ENCODE measurements at regions of chr3 and their contacts with region 1.

Region 1: GRCh38 chr3:11288786-11289682 is 16.8 kb downstream of the ATG7 start:
- DNase-seq: no peak
- ATAC-seq: peak; percentile 32
- H3K4me3 Mint-ChIP-seq: peak overlapping the region; percentile 61
- H3K27ac Mint-ChIP-seq: peak overlapping the region; percentile 99
- H3K4me1 Mint-ChIP-seq: peaks cover 46% of the 10 kb centered on the region
- H3K27me3 Mint-ChIP-seq: no peaks in the 10 kb centered on the region

Region 2: GRCh38 chr3:11250902-11251813 is 37.9 kb before region 1 on chr3:
- POLR2A ChIA-PET with region 1: no interaction called
- DNase-seq: no peak
- ATAC-seq: no peak
- H3K4me3 Mint-ChIP-seq: no peak overlapping the region
- H3K27ac Mint-ChIP-seq: peak overlapping the region; percentile 43
- H3K4me1 Mint-ChIP-seq: peaks cover 8% of the 10 kb centered on the region
- H3K27me3 Mint-ChIP-seq: peaks cover 5% of the 10 kb centered on the region

Region 3: DNA sequence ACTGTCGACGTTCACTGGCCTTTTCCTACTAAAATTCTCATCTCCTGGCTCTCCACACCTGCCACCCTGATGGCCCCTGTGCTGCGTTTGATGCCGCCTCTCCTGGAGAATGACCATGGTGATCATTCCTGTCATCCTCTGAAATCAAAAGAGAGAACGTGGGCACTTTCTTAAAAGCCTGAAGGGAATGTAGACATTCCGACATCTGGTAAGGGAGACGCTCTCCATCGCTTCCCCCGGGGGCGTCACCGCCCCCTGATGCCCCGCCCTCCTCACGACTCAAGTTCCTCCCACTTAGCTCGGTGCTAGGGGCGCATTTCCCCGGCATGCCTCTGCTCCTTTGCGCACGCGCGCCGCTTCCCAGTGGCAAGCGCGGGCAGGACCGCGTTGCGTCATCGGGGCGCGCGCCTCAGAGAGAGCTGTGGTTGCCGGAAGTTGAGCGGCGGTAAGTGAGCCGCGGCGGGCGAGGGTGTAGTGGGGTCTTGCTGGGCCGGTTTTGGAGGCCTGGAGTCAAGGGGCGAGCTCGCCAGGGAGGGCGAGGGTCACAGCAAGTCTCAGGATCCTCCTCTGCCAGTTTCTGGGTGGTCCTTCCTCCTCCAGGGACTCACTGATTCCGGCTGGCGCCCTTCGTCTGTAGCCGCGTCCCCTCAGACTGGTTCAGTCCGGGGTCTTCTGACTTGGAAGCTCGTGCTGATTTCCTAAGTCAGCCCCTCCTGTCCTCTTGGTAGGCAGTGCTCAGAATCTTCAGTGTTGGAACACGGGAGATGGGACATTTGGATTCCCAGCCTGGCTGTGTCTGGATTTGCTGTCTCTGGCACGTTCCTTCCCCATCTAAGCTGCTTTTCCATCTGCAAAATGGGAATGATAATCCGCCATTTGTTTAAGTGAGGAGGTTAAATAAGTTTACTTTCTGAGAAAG is 16.8 kb before region 1 on chr3 and contains the start of gene ATG7:
- POLR2A ChIA-PET with region 1: interaction called, 96 read pairs
- DNase-seq: peak; percentile 99
- ATAC-seq: peak; percentile 96
- H3K4me3 Mint-ChIP-seq: peak within 1 kb of the TSS; percentile 96
- H3K27ac Mint-ChIP-seq: peak within 1 kb of the TSS; percentile 97
- H3K4me1 Mint-ChIP-seq: peaks cover 42% of the 10 kb centered on the region
- H3K27me3 Mint-ChIP-seq: no peaks in the 10 kb centered on the region
- total RNA-seq, gene ATG7: 26.4 to 28.6 TPM

Region 4: DNA sequence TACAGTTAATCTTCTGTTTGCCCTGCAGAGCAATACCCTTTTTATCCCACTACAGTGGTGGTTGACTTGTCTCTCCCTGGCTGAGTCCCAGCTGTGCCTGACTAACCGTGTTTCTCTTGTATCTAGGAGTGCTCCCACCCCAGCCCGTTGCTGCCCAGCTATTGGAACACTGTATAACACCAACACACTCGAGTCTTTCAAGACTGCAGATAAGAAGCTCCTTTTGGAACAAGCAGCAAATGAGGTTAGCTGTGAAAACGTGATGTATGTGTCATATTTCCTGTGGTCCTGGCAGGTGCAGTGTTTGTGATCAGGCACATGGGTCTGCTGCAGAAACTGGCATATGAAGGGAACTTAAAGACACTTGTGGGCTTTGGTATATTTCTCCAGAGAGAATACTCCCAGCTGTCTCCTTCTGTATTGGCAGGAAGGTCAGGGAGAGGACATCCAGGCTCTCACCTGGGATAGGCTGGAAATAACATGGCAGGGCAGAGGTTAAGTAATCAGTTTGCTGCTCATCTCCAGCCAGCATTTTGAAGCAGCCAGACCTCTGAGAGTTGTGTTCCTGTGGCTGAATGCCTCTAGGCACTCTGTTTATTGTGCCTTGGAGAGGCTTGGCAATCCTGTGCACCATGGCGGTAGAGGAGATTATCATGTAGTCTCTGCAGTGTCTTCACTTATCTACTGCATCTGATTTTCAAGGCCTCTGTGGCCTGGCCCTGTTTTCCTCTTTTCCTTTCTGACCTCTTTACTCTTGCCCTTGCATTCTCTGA is 18.0 kb after region 1 on chr3:
- POLR2A ChIA-PET with region 1: interaction called, 14 read pairs
- DNase-seq: no peak
- ATAC-seq: peak; percentile 90
- H3K4me3 Mint-ChIP-seq: peak overlapping the region; percentile 57
- H3K27ac Mint-ChIP-seq: peak overlapping the region; percentile 49
- H3K4me1 Mint-ChIP-seq: peaks cover 26% of the 10 kb centered on the region
- H3K27me3 Mint-ChIP-seq: no peaks in the 10 kb centered on the region